ENCODE measurements at regions of chr5 and their contacts with region 1.

Region 1: GRCh38 chr5:131270809-131271208 is 7.0 kb downstream of the CDC42SE2 start:
- DNase-seq: no peak
- H3K4me3 ChIP-seq: peak overlapping the region in 1 of 2 donors; percentile 55
- H3K4me3 Mint-ChIP-seq: peak overlapping the region; percentile 84 to 93 (median 90)
- H3K27ac ChIP-seq: peak overlapping the region; percentile 71
- H3K27ac Mint-ChIP-seq: peak overlapping the region; percentile 88 to 100 (median 95)
- H3K4me1 ChIP-seq: peaks cover 83% of the 10 kb centered on the region
- H3K4me1 Mint-ChIP-seq: peaks cover 38 to 79% (median 57%) of the 10 kb centered on the region in 4 donors
- H3K27me3 ChIP-seq: no peaks in the 10 kb centered on the region
- H3K27me3 Mint-ChIP-seq: no peaks in the 10 kb centered on the region

Region 2: GRCh38 chr5:131114754-131115153 is 156.1 kb before region 1 on chr5:
- CTCF ChIA-PET with region 1: no interaction called
- POLR2A ChIA-PET with region 1: no interaction called
- intact Hi-C with region 1: no loop called
- DNase-seq: no peak
- H3K4me3 ChIP-seq: no peak overlapping the region
- H3K4me3 Mint-ChIP-seq: no peak overlapping the region
- H3K27ac ChIP-seq: no peak overlapping the region
- H3K27ac Mint-ChIP-seq: no peak overlapping the region
- H3K4me1 ChIP-seq: peaks cover 2% of the 10 kb centered on the region
- H3K4me1 Mint-ChIP-seq: peaks cover 0 to 2% (median 1%) of the 10 kb centered on the region in 4 donors
- H3K27me3 ChIP-seq: no peaks in the 10 kb centered on the region
- H3K27me3 Mint-ChIP-seq: no peaks in the 10 kb centered on the region

Region 3: GRCh38 chr5:131239686-131240085 is 31.1 kb before region 1 on chr5:
- CTCF ChIA-PET with region 1: no interaction called
- POLR2A ChIA-PET with region 1: no interaction called
- intact Hi-C with region 1: no loop called
- DNase-seq: no peak
- H3K4me3 ChIP-seq: no peak overlapping the region
- H3K4me3 Mint-ChIP-seq: no peak overlapping the region
- H3K27ac ChIP-seq: no peak overlapping the region
- H3K27ac Mint-ChIP-seq: no peak overlapping the region
- H3K4me1 ChIP-seq: no peaks in the 10 kb centered on the region
- H3K4me1 Mint-ChIP-seq: no peaks in the 10 kb centered on the region
- H3K27me3 ChIP-seq: no peaks in the 10 kb centered on the region
- H3K27me3 Mint-ChIP-seq: no peaks in the 10 kb centered on the region

Region 4: GRCh38 chr5:131281133-131281867 is 10.5 kb after region 1 on chr5:
- CTCF ChIA-PET with region 1: interaction called, 30 read pairs
- POLR2A ChIA-PET with region 1: interaction called, 1,078 read pairs
- intact Hi-C with region 1: loop called (anchors 1 kb)
- DNase-seq: peak; percentile 57 to 89 (median 85)
- H3K4me3 ChIP-seq: peak overlapping the region; percentile 0 to 37
- H3K4me3 Mint-ChIP-seq: peak overlapping the region; percentile 57 to 90 (median 82)
- H3K27ac ChIP-seq: peak overlapping the region; percentile 63
- H3K27ac Mint-ChIP-seq: peak overlapping the region; percentile 71 to 95 (median 87)
- H3K4me1 ChIP-seq: peaks cover 89% of the 10 kb centered on the region
- H3K4me1 Mint-ChIP-seq: peaks cover 54 to 89% (median 73%) of the 10 kb centered on the region in 4 donors
- H3K27me3 ChIP-seq: no peaks in the 10 kb centered on the region
- H3K27me3 Mint-ChIP-seq: no peaks in the 10 kb centered on the region

Region 5: GRCh38 chr5:131289738-131290137 is 18.9 kb after region 1 on chr5:
- CTCF ChIA-PET with region 1: interaction called, 18 read pairs
- POLR2A ChIA-PET with region 1: interaction called, 1,078 read pairs
- intact Hi-C with region 1: no loop called
- DNase-seq: peak in 1 of 5 donors; percentile 52
- H3K4me3 ChIP-seq: peak overlapping the region in 1 of 2 donors; percentile 23
- H3K4me3 Mint-ChIP-seq: peak overlapping the region; percentile 81 to 88 (median 86)
- H3K27ac ChIP-seq: peak overlapping the region; percentile 56
- H3K27ac Mint-ChIP-seq: peak overlapping the region; percentile 86 to 98 (median 94)
- H3K4me1 ChIP-seq: peaks cover 90% of the 10 kb centered on the region
- H3K4me1 Mint-ChIP-seq: peaks cover 41 to 82% (median 60%) of the 10 kb centered on the region in 4 donors
- H3K27me3 ChIP-seq: no peaks in the 10 kb centered on the region
- H3K27me3 Mint-ChIP-seq: no peaks in the 10 kb centered on the region

Region 6: GRCh38 chr5:131589510-131590348 is 318.9 kb after region 1 on chr5:
- CTCF ChIA-PET with region 1: no interaction called
- POLR2A ChIA-PET with region 1: no interaction called
- intact Hi-C with region 1: no loop called
- DNase-seq: peak in 4 of 5 donors; percentile 56 to 60 (median 58)
- H3K4me3 ChIP-seq: no peak overlapping the region
- H3K4me3 Mint-ChIP-seq: no peak overlapping the region
- H3K27ac ChIP-seq: no peak overlapping the region
- H3K27ac Mint-ChIP-seq: peak overlapping the region in 4 of 7 donors; percentile 22 to 77 (median 52)
- H3K4me1 ChIP-seq: peaks cover 17% of the 10 kb centered on the region
- H3K4me1 Mint-ChIP-seq: peaks cover 21 to 58% (median 32%) of the 10 kb centered on the region in 4 donors
- H3K27me3 ChIP-seq: no peaks in the 10 kb centered on the region
- H3K27me3 Mint-ChIP-seq: no peaks in the 10 kb centered on the region